ENCODE measurements at regions of chr21 and their contacts with region 1.

Region 1: DNA sequence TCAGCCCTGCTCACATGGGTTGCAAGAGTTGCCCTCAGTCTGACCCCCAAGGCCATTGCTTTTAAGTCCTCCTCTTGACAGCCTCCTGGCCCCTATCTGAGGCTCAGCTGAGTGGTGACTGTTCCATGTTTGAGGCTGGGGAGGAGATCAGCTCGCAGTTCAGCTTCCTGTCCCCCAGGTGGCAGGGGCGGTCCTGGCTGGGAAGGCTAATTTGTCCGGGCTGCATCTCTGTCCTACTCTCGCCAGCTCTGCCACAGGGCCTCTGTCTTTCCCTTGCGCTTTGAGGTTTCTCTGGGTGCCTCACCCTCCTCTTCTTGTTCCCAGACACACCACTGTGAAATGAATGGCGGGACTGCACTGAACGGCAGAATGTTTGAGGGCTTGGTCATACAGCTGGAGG is 157.3 kb downstream of the KCNJ6 start:
- DNase-seq: peak; percentile 46 to 65 (median 52)
- ATAC-seq: peak; percentile 90
- H3K4me3 ChIP-seq: no peak overlapping the region
- H3K27ac ChIP-seq: no peak overlapping the region
- H3K4me1 ChIP-seq: no peaks in the 10 kb centered on the region
- H3K27me3 ChIP-seq: peaks cover 5 to 54% of the 10 kb centered on the region in 2 experiments; a peak in 4 of 5 replicates
- CTCF ChIP-seq: peak; percentile 64 to 71 (median 69)
- EP300 ChIP-seq: no peak
- POLR2A ChIP-seq: no peak
- RAD21 ChIP-seq: peak; percentile 53 to 73

Region 2: GRCh38 chr21:37896788-37897187 is 137.8 kb after region 1 on chr21:
- CTCF ChIA-PET with region 1: no interaction called
- POLR2A ChIA-PET with region 1: no interaction called
- in situ Hi-C with region 1: no loop called
- intact Hi-C with region 1: no loop called
- DNase-seq: no peak
- ATAC-seq: no peak
- H3K4me3 ChIP-seq: no peak overlapping the region
- H3K27ac ChIP-seq: no peak overlapping the region
- H3K4me1 ChIP-seq: no peaks in the 10 kb centered on the region
- H3K27me3 ChIP-seq: peaks cover 12 to 29% of the 10 kb centered on the region in 2 experiments; a peak in 4 of 5 replicates
- CTCF ChIP-seq: no peak
- EP300 ChIP-seq: no peak
- POLR2A ChIP-seq: no peak
- RAD21 ChIP-seq: no peak

Region 3: DNA sequence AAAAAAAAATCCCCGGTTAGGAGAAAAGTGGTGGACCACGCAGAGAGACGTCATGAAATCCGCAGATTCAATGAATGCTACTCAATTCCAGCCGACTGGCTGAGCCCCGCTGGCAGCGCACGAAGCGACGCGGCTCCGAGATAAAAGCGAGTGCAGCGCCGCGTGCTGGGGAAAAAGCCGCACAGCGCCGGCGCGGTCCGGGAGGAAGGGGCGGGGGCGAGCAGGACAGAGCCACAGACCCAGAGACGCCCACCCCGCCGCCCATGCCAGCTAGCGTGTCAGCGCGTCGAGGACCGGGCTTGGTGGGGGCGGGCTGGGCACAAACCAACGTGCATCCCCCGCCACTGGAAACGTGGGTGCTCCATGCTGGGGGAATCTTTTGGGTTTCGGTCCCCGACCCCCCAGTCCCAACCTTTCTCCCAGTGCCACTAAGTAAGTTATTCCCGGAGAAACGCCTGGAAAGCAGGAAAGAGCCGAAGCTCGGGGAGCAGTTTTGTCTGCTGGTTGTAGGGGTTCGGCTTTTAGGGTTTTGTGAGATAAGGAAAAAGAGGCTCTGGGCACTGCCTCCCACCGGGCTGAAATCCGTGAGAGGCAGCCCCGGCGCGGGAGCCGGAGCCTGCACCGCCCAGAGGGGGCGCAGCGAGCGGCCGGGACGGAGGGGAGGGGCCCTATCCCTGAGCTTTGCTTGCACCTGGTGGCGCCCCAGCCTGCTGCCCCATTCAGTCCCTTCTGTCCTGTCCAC is 157.5 kb after region 1 on chr21 and contains the start of gene KCNJ6:
- CTCF ChIA-PET with region 1: no interaction called
- POLR2A ChIA-PET with region 1: no interaction called
- in situ Hi-C with region 1: no loop called
- intact Hi-C with region 1: loop called (anchors 1 kb)
- DNase-seq: peak; percentile 59 to 78 (median 62)
- ATAC-seq: peak; percentile 99
- H3K4me3 ChIP-seq: no peak within 1 kb of the TSS; the same call in 1 of the 2 replicates
- H3K27ac ChIP-seq: no peak within 1 kb of the TSS
- H3K4me1 ChIP-seq: peaks cover 0 to 18% of the 10 kb centered on the region in 2 experiments; a peak in 2 of 5 replicates
- H3K27me3 ChIP-seq: peaks cover 13 to 41% of the 10 kb centered on the region in 2 experiments; a peak in 4 of 5 replicates
- CTCF ChIP-seq: peak; percentile 67 to 94 (median 74)
- EP300 ChIP-seq: no peak
- POLR2A ChIP-seq: no peak
- RAD21 ChIP-seq: peak in 1 of 2 experiments; percentile 50; a peak in 2 of 4 replicates
- polyA plus RNA-seq, gene KCNJ6: 0.13 TPM